HCT116 (cell line): ENCODE measurements at regions of chr5 and their contacts with region 1.

Region 1: GRCh38 chr5:154405078-154405792 is 40.6 kb upstream of the SAP30L start:
- DNase-seq: peak; percentile 40
- ATAC-seq: peak; percentile 96
- H3K4me3 ChIP-seq: no peak overlapping the region
- H3K27ac ChIP-seq: no peak overlapping the region
- H3K4me1 ChIP-seq: peaks cover 8 to 23% of the 10 kb centered on the region in 2 experiments; a peak in 3 of 4 replicates
- H3K27me3 ChIP-seq: no peaks in the 10 kb centered on the region
- CTCF ChIP-seq: peak; percentile 77 to 85 (median 84)
- POLR2A ChIP-seq: no peak
- RAD21 ChIP-seq: peak; percentile 98

Region 2: GRCh38 chr5:152532714-152533113 is 1872.5 kb before region 1 on chr5:
- CTCF ChIA-PET with region 1: no interaction called
- POLR2A ChIA-PET with region 1: no interaction called
- RAD21 ChIA-PET with region 1: no interaction called
- intact Hi-C with region 1: loop called (anchors 5 kb)
- DNase-seq: peak; percentile 42
- ATAC-seq: peak; percentile 64
- H3K4me3 ChIP-seq: no peak overlapping the region
- H3K27ac ChIP-seq: no peak overlapping the region
- H3K4me1 ChIP-seq: no peaks in the 10 kb centered on the region
- H3K27me3 ChIP-seq: peaks cover 7% of the 10 kb centered on the region; the same call in 1 of the 2 replicates
- CTCF ChIP-seq: peak in 2 of 3 experiments; percentile 57 to 63; a peak in 3 of 6 replicates
- POLR2A ChIP-seq: no peak
- RAD21 ChIP-seq: peak; percentile 78

Region 3: GRCh38 chr5:153807801-153808200 is 597.4 kb before region 1 on chr5:
- CTCF ChIA-PET with region 1: no interaction called
- POLR2A ChIA-PET with region 1: no interaction called
- RAD21 ChIA-PET with region 1: no interaction called
- intact Hi-C with region 1: no loop called
- DNase-seq: no peak
- ATAC-seq: no peak
- H3K4me3 ChIP-seq: no peak overlapping the region
- H3K27ac ChIP-seq: no peak overlapping the region
- H3K4me1 ChIP-seq: no peaks in the 10 kb centered on the region
- H3K27me3 ChIP-seq: peaks cover 15% of the 10 kb centered on the region
- CTCF ChIP-seq: no peak
- POLR2A ChIP-seq: no peak
- RAD21 ChIP-seq: no peak

Region 4: DNA sequence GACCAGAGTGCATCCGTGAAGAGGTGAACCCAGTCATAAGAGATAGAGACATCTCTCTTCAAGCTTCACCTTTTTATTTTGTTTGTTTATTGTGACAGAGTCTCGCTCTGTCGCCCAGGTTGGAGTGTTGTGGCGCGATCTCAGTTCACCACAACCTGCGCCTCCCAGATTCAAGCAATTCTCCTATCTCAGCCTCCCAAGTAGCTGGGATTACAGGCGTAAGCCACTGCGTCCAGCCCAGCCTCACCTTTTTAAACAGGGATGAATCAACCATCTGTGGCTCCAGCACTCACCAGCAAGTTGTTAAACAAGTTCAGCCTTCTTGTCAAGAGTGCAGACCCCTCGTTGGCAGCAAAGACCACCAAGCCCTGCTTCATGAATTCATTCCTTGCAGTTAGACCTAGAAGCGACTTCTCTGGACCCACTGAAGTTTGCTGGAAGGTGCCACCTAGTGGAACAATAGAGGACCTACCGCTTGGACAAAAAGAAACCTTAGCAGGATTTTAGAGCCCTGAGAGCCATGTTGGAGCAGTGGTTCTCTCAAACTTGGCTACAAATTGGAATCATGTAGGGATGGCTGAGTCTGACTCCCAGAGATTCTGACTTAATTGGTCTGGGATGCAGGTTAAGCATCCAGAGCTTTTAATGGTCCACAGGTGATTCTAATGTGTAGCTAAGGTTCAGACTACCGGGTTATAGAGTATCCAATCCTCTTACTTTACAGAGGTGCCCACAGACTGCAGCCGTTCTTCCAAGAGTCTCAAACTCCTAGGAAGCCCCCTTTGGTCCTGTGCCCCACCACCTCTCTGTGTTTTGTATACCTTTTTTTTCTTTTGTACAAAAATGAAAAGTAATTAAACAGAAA is 225.2 kb before region 1 on chr5:
- CTCF ChIA-PET with region 1: interaction called, 4 read pairs
- POLR2A ChIA-PET with region 1: no interaction called
- RAD21 ChIA-PET with region 1: interaction called in 1 of 2 experiments, 4 read pairs
- intact Hi-C with region 1: loop called (anchors 2 kb)
- DNase-seq: peak; percentile 40
- ATAC-seq: peak; percentile 97
- H3K4me3 ChIP-seq: no peak overlapping the region
- H3K27ac ChIP-seq: no peak overlapping the region
- H3K4me1 ChIP-seq: no peaks in the 10 kb centered on the region
- H3K27me3 ChIP-seq: peaks cover 29% of the 10 kb centered on the region; the same call in 1 of the 2 replicates
- CTCF ChIP-seq: peak; percentile 76 to 80 (median 78)
- POLR2A ChIP-seq: no peak
- RAD21 ChIP-seq: peak; percentile 73

Region 5: GRCh38 chr5:154196955-154197652 is 208.1 kb before region 1 on chr5:
- CTCF ChIA-PET with region 1: interaction called, 9 read pairs
- POLR2A ChIA-PET with region 1: no interaction called
- RAD21 ChIA-PET with region 1: interaction called in 1 of 2 experiments, 3 read pairs
- intact Hi-C with region 1: loop called (anchors 5 kb)
- DNase-seq: no peak
- ATAC-seq: peak; percentile 46
- H3K4me3 ChIP-seq: no peak overlapping the region
- H3K27ac ChIP-seq: no peak overlapping the region
- H3K4me1 ChIP-seq: peaks cover 8 to 14% of the 10 kb centered on the region in 2 experiments; a peak in 3 of 4 replicates
- H3K27me3 ChIP-seq: no peaks in the 10 kb centered on the region
- CTCF ChIP-seq: peak; percentile 24 to 28 (median 27); a peak in 3 of 6 replicates
- POLR2A ChIP-seq: no peak
- RAD21 ChIP-seq: peak; percentile 40

Region 6: DNA sequence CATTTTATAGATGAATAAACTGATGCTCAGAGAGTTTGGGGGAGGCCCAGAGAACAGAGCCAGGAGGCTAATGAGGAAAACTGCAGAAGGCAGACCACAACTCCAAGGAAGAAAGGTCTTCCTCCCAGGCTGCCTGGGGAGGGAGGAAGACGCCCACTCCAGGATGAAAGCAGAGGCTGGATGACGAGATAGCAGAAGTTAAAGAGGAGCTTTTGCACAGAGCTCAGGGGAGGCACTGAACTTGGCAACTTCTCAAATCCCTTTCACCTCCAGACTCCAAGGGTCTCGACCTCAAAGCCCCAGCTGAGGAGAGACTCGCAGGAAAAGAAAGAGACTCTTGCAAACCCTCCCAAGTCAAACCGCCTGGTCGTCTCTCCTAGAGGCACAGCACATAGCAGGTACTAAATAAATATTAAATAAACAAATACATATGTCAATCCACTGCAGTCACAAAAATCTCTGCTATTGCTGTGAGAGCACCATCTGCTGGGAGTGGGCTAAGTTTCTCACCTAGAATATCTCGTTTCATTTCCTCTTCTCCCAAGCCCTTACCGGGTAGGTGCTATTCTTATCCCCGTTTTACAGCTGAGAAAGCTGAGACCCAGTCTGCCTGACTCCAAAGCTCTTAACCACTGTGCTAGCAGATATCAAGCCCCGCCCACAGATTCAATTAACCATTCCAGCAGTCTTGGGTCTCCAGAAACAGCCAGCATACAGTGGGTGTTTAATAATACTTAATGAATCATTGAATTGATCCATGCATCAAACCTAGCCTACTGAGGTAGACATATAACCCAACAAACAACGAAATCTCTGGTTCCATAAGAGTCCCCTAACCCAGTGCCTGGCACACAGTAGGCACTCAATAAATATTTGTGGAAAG is 170.6 kb after region 1 on chr5:
- CTCF ChIA-PET with region 1: no interaction called
- POLR2A ChIA-PET with region 1: no interaction called
- RAD21 ChIA-PET with region 1: no interaction called
- intact Hi-C with region 1: no loop called
- DNase-seq: no peak
- ATAC-seq: peak; percentile 60
- H3K4me3 ChIP-seq: no peak overlapping the region
- H3K27ac ChIP-seq: no peak overlapping the region
- H3K4me1 ChIP-seq: peaks cover 5 to 22% of the 10 kb centered on the region in 2 experiments; a peak in 3 of 4 replicates
- H3K27me3 ChIP-seq: no peaks in the 10 kb centered on the region
- CTCF ChIP-seq: peak in 2 of 3 experiments; percentile 34 to 42; a peak in 3 of 6 replicates
- POLR2A ChIP-seq: no peak
- RAD21 ChIP-seq: peak; percentile 43; the same call in 1 of the 2 replicates